ENCODE measurements at regions of chr12 and their contacts with region 1.

Region 1: DNA sequence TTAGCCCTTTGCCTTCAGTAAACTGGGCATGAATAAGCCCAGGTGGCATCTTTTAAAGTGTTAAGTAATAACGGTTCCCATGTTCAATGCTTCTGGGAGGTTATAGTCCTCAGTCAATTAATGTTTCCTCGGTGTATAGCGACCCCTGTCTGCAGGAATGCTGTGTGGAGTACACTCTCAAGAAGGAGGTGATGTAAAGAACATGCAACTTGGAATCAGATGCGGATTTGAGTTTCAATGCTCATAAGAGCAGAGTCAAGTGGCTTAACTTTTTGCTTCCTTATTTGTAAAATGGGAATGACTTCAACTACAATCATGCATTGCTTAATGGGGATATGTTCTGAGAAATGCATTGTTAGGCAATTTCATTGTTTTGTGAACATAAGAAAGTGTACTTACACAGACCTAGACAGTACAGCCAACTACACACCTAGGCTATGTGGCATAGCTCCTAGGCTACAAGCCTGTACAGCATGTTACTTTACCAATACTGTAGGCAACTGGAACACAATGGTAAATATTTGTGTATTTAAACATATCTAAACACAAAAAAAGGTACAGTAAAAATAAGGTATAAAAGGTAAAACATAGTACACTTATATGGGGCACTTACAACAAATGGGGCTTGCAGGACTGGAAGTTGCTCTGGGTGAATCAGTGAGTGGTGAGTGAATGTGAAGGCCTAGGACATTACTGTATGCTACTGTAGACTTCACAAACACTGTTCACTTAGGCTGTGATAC is 6.8 kb upstream of the MRPS35 start:
- DNase-seq: peak; percentile 77
- H3K4me3 ChIP-seq: no peak overlapping the region
- H3K27ac ChIP-seq: no peak overlapping the region
- H3K4me1 ChIP-seq: no peaks in the 10 kb centered on the region
- CTCF ChIP-seq: peak; percentile 98

Region 2: DNA sequence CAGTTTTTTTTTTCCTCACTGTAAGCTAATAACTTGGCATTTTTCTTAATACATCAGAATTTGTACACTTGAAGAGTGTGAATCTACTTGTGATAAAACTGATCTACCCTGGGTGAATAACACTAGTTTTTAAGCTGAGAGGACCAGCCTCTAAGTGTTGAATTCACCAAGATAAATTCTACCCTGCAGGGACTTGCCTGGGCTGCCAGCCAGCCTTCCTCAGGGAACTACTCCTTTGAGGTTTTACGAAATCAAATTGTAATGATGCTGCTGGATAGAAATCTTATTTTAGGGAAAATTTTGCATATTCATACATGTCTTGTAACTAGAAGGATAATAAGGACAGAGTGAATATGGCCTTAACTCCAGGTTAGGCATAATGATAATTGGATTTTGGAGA is 679.6 kb before region 1 on chr12:
- CTCF ChIA-PET with region 1: no interaction called
- POLR2A ChIA-PET with region 1: no interaction called
- intact Hi-C with region 1: loop called (anchors 5 kb)
- DNase-seq: no peak
- H3K4me3 ChIP-seq: no peak overlapping the region
- H3K27ac ChIP-seq: no peak overlapping the region
- H3K4me1 ChIP-seq: peaks cover 15% of the 10 kb centered on the region
- CTCF ChIP-seq: no peak

Region 3: GRCh38 chr12:27434673-27435565 is 269.0 kb before region 1 on chr12:
- CTCF ChIA-PET with region 1: no interaction called
- POLR2A ChIA-PET with region 1: interaction called, 5 read pairs
- intact Hi-C with region 1: loop called (anchors 2 kb)
- DNase-seq: peak; percentile 34
- H3K4me3 ChIP-seq: no peak overlapping the region
- H3K27ac ChIP-seq: no peak overlapping the region
- H3K4me1 ChIP-seq: peaks cover 17% of the 10 kb centered on the region
- CTCF ChIP-seq: peak; percentile 78

Region 4: DNA sequence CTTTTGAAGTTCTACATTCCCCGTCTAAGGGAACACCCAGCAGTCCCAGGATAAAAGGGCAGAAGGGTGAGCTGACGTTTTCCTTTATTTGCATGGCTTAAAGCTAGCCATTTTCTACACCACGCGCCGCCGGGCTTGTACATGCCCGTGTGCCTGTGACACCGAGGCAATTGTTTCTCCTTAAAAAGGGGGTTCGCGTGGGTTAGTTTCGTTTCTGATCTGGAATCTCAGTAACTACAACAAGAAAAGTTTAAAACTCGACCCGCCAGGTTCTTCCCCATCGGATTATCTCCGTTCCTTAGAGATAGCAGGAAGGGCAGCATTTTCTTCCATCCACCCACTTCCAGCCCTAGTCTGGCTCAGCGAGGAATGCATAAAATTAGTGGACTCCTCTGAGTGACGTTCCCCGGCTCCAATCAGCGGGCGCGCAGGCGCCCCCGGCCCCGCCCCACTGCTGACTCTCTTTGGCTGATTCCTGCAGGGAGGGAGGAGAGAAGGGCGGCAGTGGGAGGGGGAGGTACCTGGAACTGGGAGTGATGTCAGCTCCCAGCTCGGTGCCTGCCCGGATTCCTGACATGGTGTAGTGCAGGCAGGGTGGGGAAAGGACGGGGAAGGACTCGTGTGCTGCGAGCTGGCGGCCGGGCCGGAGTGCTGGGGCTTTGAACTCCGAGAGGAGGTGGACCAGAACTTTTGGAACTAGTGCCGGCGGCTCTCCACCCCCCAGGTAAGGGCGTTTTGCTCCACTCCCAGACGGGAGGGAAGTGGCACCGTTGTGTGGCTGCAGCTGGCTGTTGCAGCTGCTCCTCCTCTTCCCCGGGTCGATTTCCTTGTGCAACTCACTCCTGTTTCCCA is 180.0 kb before region 1 on chr12 and contains the start of gene PPFIBP1:
- CTCF ChIA-PET with region 1: no interaction called
- POLR2A ChIA-PET with region 1: no interaction called
- intact Hi-C with region 1: loop called (anchors 5 kb)
- DNase-seq: peak; percentile 91
- H3K4me3 ChIP-seq: peak within 1 kb of the TSS; percentile 88
- H3K27ac ChIP-seq: peak within 1 kb of the TSS; percentile 22
- H3K4me1 ChIP-seq: peaks cover 18% of the 10 kb centered on the region
- CTCF ChIP-seq: no peak
- total RNA-seq, gene PPFIBP1: 7.3 and 12.7 TPM in 2 replicates

Measured in OCI-LY7 (cell line).